A549 (cell line): ENCODE measurements at regions of chr18 and their contacts with region 1.

Region 1: GRCh38 chr18:35497370-35498197 is at the start of gene INO80C:
- DNase-seq: peak; percentile 73 to 92
- ATAC-seq: peak; percentile 93 to 98
- H3K4me3 ChIP-seq: peak within 1 kb of the TSS; percentile 61
- H3K27ac ChIP-seq: peak within 1 kb of the TSS; percentile 91 to 99
- H3K4me1 ChIP-seq: peaks cover 30% of the 10 kb centered on the region
- CTCF ChIP-seq: no peak
- EP300 ChIP-seq: peak in 1 of 2 experiments; percentile 13; a peak in 1 of 5 replicates
- POLR2A ChIP-seq: peak; percentile 76
- RAD21 ChIP-seq: peak; percentile 31 to 43
- polyA plus RNA-seq, gene INO80C: 22.1 and 22.4 TPM in 2 replicates

Region 2: GRCh38 chr18:35478520-35479435 is 18.8 kb before region 1 on chr18:
- CTCF ChIA-PET with region 1: interaction called, 6 read pairs
- POLR2A ChIA-PET with region 1: interaction called, 41 read pairs
- DNase-seq: peak; percentile 82 to 90
- ATAC-seq: peak; percentile 90 to 94
- H3K4me3 ChIP-seq: peak overlapping the region; percentile 15; the same call in 2 of the 3 replicates
- H3K27ac ChIP-seq: peak overlapping the region; percentile 90 to 91
- H3K4me1 ChIP-seq: peaks cover 65% of the 10 kb centered on the region
- CTCF ChIP-seq: no peak
- EP300 ChIP-seq: no peak
- POLR2A ChIP-seq: no peak
- RAD21 ChIP-seq: no peak

Region 3: DNA sequence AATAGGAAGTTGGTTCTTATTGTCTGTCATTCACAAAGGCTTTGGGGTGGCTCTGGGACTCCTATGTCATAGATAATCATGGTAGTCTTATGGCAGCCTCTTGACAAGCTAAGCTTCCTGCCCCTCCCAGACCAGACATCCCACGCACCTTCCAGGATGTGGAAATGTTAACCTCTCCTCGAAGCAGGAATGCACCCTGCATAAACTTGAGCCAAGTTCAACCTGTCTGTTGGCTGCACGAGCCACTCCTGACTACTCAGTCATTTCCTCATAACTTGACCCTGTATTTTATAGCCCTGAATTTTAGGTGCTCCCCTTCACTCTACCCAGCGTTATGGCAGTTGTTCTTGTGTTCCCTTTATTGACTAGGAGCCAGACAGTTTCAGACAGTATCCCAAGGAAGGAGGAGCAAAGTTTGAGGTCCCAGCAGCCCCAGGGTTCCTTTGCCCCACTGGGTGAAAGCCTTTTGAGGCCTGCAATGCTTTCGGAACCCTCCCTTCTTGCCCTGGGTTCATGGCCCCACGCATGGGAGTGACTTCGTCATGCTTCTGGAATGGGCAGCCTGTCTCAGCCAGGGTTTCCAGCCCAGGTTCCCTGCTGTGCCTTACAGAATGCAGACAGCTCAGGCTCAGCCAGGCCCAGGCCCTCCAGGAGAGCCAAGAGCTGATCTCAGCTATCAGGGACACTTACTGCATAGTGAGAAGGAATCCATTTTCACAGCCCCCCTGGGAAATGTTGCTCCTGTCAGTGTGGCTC is 15.8 kb after region 1 on chr18:
- CTCF ChIA-PET with region 1: no interaction called
- POLR2A ChIA-PET with region 1: interaction called, 15 read pairs
- DNase-seq: peak; percentile 29 to 87
- ATAC-seq: peak; percentile 94 to 96
- H3K4me3 ChIP-seq: no peak overlapping the region
- H3K27ac ChIP-seq: peak overlapping the region; percentile 84 to 91
- H3K4me1 ChIP-seq: peaks cover 44% of the 10 kb centered on the region
- CTCF ChIP-seq: no peak
- EP300 ChIP-seq: peak; percentile 23 to 64; a peak in 3 of 5 replicates
- POLR2A ChIP-seq: no peak
- RAD21 ChIP-seq: 0 out of 5 replicates have a peak, but pooled peaks have one; percentile 6 to 26

Region 4: GRCh38 chr18:35580701-35581539 is 83.3 kb after region 1 on chr18:
- CTCF ChIA-PET with region 1: no interaction called
- POLR2A ChIA-PET with region 1: interaction called, 10 read pairs
- DNase-seq: peak in 1 of 2 experiments; percentile 51
- ATAC-seq: peak; percentile 86 to 89
- H3K4me3 ChIP-seq: peak overlapping the region; percentile 74
- H3K27ac ChIP-seq: peak overlapping the region; percentile 96 to 100
- H3K4me1 ChIP-seq: peaks cover 7% of the 10 kb centered on the region; the same call in 1 of the 3 replicates
- CTCF ChIP-seq: no peak
- EP300 ChIP-seq: no peak
- POLR2A ChIP-seq: no peak; the same call in 1 of the 2 replicates
- RAD21 ChIP-seq: no peak